Lower lobe of right lung (tissue), 2 donors: ENCODE measurements at regions of chr15 and their contacts with region 1.

Region 1: DNA sequence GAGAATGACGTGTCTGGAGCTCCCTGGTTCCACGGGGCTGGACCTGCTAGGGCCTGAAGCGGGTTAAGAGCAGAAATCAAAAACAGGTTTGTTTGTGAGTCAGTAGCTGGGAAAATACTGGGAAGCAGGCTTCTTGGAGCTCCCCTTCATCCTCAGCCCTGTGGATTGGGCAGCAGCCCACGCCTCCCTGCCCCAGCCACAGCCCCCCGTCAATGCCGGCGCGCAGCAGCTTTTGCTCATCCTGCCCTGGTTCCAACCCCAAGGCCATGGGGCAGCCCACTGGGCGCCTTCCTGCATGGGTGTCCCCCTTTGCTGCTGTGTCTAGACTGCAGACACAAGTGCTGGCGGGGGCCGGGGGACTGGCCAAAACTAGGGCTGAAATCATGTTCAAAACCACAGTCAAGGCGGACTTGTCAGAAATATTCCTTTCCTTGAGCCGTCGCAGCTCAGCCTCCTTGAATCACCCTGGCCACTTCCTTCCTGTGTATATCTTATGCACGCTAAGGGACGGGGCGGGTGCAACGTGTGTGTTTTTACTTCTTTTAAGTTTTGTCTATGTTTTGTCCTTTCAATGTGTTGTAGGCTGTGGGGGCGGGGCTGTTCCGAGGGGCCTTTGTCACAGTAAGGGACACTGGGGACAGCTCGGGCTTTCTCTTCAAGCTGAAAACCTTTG is 108.1 kb downstream of the KLF13 start:
- DNase-seq: peak; percentile 83
- ATAC-seq: peak; percentile 59 to 60
- H3K4me3 ChIP-seq: peak overlapping the region; percentile 39
- H3K27ac ChIP-seq: peak overlapping the region; percentile 90
- H3K4me1 ChIP-seq: peaks cover 55% of the 10 kb centered on the region
- H3K27me3 ChIP-seq: no peaks in the 10 kb centered on the region
- CTCF ChIP-seq: no peak

Region 2: DNA sequence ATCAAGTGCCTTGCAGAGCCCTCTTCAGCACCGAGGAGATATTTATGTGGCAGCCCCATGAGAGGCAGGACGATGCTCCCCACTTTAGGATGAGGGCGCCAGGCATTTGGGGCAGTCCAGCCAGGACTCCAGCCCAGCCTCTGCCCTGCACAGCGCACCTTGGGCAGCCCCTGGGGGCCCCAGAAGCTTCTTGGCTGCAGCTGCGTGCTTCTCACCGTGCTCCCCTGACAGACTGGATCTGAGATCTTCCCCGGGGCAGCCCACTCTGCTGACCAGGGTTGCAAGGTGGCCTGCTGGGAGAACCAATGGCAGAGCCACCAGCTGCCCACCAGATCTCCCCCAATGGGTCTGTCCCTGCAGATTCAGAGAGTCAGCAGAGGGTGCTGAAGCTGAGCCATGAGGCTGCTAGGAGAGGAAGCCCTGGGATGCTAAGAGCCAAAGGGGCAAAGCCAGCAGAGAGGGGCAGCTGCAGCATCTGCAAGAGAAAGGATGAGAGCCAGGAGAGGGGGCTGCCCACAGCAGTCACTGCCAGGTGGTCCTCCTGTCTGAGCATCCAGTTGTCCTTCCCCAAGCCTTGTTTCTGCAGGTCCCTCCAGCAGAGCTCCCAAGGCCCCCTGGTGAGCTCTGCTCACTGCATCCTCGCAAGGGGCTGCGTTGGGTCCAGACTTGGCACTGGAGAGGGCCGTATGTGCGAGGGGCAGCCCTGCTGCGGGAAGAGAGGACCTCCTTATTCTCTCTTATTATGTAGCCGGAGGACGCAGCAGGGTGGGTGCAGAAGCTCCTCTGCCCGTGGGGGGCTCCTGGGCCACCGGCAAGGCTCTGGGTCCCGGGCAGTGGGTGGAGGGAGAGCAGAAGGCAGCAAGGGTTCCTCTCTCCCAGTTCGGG is 122.7 kb before region 1 on chr15:
- intact Hi-C with region 1: no loop called
- DNase-seq: no peak
- ATAC-seq: no peak
- H3K4me3 ChIP-seq: no peak overlapping the region
- H3K27ac ChIP-seq: no peak overlapping the region
- H3K4me1 ChIP-seq: no peaks in the 10 kb centered on the region
- H3K27me3 ChIP-seq: no peaks in the 10 kb centered on the region
- CTCF ChIP-seq: no peak

Region 3: DNA sequence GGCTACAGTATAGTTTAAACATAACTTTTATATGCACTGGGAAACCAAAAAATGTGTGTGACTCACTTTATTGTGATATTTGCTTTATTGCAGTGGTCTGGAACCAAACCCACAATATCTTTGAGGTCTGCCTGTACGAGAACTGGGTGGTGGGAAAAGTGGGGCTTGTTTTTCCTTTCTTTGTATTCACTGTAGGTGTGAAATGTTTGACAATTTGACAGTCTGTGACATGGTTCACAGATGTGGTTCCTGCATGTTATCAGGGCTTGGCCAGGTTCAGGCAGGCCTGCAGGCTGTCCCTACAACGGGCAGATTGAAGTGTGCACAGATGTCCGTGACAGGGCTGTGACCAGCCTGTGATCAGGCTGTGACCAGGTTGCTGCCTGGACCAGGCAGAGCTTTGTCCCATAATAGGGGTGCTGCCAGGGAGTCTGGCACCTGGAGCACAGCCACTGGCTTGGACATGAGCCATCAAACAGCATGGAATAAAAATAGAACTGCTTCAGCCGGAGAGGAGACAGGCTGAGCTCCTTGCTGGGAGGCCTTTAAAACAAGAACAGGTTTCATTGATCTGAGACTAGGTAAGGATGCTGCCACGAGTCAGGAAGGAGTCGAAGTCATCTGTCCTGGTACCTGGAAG is 47.1 kb before region 1 on chr15:
- intact Hi-C with region 1: loop called (anchors 5 kb)
- DNase-seq: no peak
- ATAC-seq: peak; percentile 26 to 36
- H3K4me3 ChIP-seq: no peak overlapping the region
- H3K27ac ChIP-seq: peak overlapping the region; percentile 51
- H3K4me1 ChIP-seq: peaks cover 29% of the 10 kb centered on the region
- H3K27me3 ChIP-seq: no peaks in the 10 kb centered on the region
- CTCF ChIP-seq: no peak